A673 (cell line): ENCODE measurements at regions of chr3 and their contacts with region 1.

Region 1: GRCh38 chr3:126287536-126288241 is 69.5 kb downstream of the KLF15 start:
- DNase-seq: peak; percentile 98
- H3K4me3 ChIP-seq: peak overlapping the region; percentile 49
- H3K27ac ChIP-seq: peak overlapping the region; percentile 99
- H3K4me1 ChIP-seq: peaks cover 72% of the 10 kb centered on the region
- H3K27me3 ChIP-seq: no peaks in the 10 kb centered on the region
- CTCF ChIP-seq: no peak

Region 2: GRCh38 chr3:126212602-126213378 is 74.9 kb before region 1 on chr3:
- CTCF ChIA-PET with region 1: no interaction called
- POLR2A ChIA-PET with region 1: no interaction called
- intact Hi-C with region 1: loop called (anchors 2 kb)
- DNase-seq: peak; percentile 60
- H3K4me3 ChIP-seq: no peak overlapping the region
- H3K27ac ChIP-seq: no peak overlapping the region
- H3K4me1 ChIP-seq: peaks cover 17% of the 10 kb centered on the region
- H3K27me3 ChIP-seq: no peaks in the 10 kb centered on the region
- CTCF ChIP-seq: peak; percentile 33

Region 3: DNA sequence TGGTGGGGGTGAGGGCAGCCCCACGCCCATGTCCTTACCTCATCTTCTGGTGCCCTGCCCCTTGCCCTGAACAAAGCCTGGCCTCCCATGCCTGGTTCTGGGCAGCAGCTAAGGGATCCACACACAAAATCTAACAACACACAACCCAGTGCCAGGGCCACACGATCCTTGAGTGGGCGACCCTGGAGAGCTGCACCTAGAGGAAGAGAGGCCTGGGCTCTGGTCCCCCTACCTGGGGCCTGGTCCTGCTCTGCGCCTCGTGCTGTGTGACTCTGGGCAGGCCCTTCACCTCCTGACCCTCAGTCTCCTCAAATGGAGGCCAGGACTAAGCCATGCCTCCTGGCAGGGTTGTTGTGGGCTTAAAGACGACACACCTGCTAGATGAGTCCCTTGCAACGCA is 291.0 kb after region 1 on chr3:
- CTCF ChIA-PET with region 1: no interaction called
- POLR2A ChIA-PET with region 1: no interaction called
- intact Hi-C with region 1: no loop called
- DNase-seq: no peak
- H3K4me3 ChIP-seq: no peak overlapping the region
- H3K27ac ChIP-seq: no peak overlapping the region
- H3K4me1 ChIP-seq: no peaks in the 10 kb centered on the region
- H3K27me3 ChIP-seq: peaks cover 40% of the 10 kb centered on the region
- CTCF ChIP-seq: no peak